MCF 10A (cell line): ENCODE measurements at regions of chr6 and their contacts with region 1.

Region 1: GRCh38 chr6:96626759-96627364 is 63.9 kb downstream of the FHL5 start:
- DNase-seq: peak; percentile 31
- H3K4me3 Mint-ChIP-seq: no peak overlapping the region
- H3K27ac Mint-ChIP-seq: no peak overlapping the region
- H3K4me1 Mint-ChIP-seq: no peaks in the 10 kb centered on the region
- H3K27me3 Mint-ChIP-seq: peaks cover 70% of the 10 kb centered on the region
- CTCF ChIP-seq: peak; percentile 41

Region 2: DNA sequence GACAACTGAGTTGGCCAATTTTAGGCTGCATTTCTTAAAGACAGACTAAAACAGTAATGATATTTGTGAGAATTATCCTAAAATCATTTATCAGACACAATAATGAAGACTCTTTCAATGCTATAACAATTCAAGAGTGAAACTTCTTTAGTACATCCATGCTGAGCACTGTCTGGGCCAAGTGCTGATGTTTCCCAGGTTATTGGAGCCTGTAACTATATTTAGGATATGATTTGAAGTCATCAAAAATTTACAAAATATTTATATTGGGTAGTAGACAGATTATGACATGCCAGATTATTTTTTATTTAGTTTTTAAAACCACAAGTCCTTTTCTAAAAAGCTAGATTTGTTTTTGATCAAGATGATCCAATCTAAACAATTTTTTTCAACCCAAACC is 18.8 kb before region 1 on chr6:
- CTCF ChIA-PET with region 1: interaction called, 10 read pairs
- POLR2A ChIA-PET with region 1: no interaction called
- intact Hi-C with region 1: no loop called
- DNase-seq: no peak
- H3K4me3 Mint-ChIP-seq: no peak overlapping the region
- H3K27ac Mint-ChIP-seq: no peak overlapping the region
- H3K4me1 Mint-ChIP-seq: no peaks in the 10 kb centered on the region
- H3K27me3 Mint-ChIP-seq: peaks cover 66% of the 10 kb centered on the region
- CTCF ChIP-seq: no peak

Region 3: DNA sequence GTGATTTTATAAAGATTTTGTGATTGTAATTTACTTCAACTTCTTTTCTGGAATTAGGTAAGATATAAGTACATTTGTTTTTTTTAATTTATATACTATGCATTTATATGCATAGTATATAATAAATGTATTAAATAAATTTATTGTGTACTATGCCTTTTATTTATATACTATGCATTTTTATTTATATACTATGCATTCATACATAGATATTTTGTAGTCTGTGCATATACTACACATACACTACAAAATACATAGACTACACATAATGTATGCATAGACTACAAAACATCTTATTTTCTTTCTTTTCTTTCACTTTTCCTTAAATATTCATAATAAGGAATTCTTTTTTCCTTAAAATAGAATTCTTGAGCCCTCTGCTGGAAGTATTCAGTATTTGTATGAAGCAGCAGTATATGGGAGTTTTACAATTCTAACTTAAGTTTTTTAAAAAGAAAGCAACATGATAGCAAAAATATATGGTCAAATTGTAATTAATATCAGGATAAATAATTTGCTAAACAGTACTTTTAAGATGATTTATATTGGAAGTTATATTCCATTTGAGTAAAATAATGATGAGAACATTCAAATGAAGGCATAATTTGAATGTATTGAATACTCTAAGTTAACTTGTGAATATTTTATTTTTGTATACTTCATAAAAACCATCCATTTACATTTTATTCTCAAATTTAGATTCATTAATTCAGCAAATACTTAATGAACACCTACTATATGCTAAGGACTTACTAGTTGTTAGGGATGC is 427.0 kb after region 1 on chr6:
- CTCF ChIA-PET with region 1: interaction called, 44 read pairs
- POLR2A ChIA-PET with region 1: no interaction called
- intact Hi-C with region 1: loop called (anchors 1 kb)
- DNase-seq: no peak
- H3K4me3 Mint-ChIP-seq: no peak overlapping the region
- H3K27ac Mint-ChIP-seq: no peak overlapping the region
- H3K4me1 Mint-ChIP-seq: no peaks in the 10 kb centered on the region
- H3K27me3 Mint-ChIP-seq: peaks cover 85% of the 10 kb centered on the region
- CTCF ChIP-seq: peak; percentile 40

Region 4: GRCh38 chr6:97059473-97059872 is 432.6 kb after region 1 on chr6:
- CTCF ChIA-PET with region 1: interaction called, 44 read pairs
- POLR2A ChIA-PET with region 1: no interaction called
- intact Hi-C with region 1: loop called (anchors 1 kb)
- DNase-seq: peak; percentile 27
- H3K4me3 Mint-ChIP-seq: no peak overlapping the region
- H3K27ac Mint-ChIP-seq: no peak overlapping the region
- H3K4me1 Mint-ChIP-seq: no peaks in the 10 kb centered on the region
- H3K27me3 Mint-ChIP-seq: peaks cover 97% of the 10 kb centered on the region
- CTCF ChIP-seq: peak; percentile 44